HCT116 (cell line): ENCODE measurements at regions of chr20 and their contacts with region 1.

Region 1: DNA sequence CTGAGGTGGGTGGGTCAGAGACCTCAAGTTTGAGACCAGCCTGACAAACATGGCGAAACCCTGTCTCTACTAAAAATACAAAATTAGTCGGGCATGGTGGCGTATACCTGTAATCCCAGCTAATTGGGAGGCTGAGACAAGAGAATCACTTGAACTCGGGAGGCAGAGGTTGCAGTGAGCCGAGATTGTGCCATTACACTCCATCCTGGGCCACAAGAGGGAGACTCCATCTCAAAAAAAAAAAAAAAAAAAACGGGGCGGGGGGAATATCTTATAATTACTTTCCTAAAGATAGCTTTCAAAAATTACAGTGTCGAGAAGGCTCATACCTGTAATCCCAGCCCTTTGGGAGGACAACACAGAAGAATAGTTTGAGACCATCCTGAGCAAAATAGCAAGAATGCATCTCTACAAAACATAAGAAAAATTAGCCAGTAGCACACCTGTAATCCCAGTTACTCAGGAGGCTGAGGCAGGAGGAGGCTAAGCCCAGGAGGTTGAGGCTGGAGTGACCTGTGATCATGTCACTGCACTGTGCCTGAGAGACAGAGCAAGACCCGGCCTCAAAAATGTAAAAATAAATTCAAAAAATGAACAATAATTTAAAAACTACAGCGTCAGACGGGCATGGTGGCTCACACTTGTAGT is 25.8 kb downstream of the CBFA2T2 start:
- DNase-seq: no peak
- ATAC-seq: peak; percentile 42; the same call in 1 of the 2 replicates
- H3K4me3 ChIP-seq: no peak overlapping the region
- H3K27ac ChIP-seq: no peak overlapping the region
- H3K4me1 ChIP-seq: peaks cover 4 to 16% of the 10 kb centered on the region in 2 experiments; a peak in 2 of 4 replicates
- H3K27me3 ChIP-seq: no peaks in the 10 kb centered on the region
- CTCF ChIP-seq: peak; percentile 22 to 43 (median 43); a peak in 4 of 6 replicates
- POLR2A ChIP-seq: no peak
- RAD21 ChIP-seq: peak; percentile 27; the same call in 1 of the 2 replicates

Region 2: DNA sequence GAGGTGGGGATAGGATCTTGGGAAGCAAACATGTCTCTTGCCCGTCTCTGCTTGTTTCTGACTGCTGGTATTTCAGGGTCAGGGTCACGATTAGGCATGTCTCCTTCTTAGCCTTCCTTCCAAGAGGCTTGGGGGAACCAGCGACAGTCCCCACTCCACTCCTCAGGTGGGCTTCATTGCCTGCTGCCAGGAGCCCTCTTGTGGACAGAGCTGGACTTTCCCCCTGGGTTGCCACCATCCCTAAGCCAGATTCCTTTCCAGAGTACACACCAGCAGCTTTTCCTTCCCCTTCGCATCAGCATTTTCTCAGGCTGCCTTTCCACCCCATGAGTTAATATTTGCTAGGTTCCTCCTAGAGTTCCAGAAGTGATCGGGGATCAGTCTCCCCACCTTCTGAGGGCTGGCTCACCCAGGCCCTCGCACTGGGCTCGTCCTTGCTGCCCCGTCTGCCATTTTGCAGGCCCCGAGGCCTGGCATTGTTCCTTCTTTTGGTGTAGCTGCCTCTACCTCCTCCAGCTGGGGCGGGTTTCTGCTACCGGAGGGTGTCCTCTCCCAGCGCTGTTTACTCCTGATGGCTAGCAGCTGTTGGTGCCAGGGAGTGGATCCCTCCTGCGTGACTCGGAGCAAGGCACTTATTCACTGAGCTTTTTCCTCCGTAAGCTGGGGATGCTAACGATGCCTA is 137.7 kb after region 1 on chr20:
- CTCF ChIA-PET with region 1: no interaction called
- POLR2A ChIA-PET with region 1: no interaction called
- RAD21 ChIA-PET with region 1: no interaction called
- intact Hi-C with region 1: loop called (anchors 5 kb)
- DNase-seq: peak; percentile 35
- ATAC-seq: peak; percentile 76
- H3K4me3 ChIP-seq: no peak overlapping the region
- H3K27ac ChIP-seq: no peak overlapping the region
- H3K4me1 ChIP-seq: peaks cover 0 to 16% of the 10 kb centered on the region in 2 experiments; a peak in 1 of 4 replicates
- H3K27me3 ChIP-seq: no peaks in the 10 kb centered on the region
- CTCF ChIP-seq: peak; percentile 75 to 92 (median 78)
- POLR2A ChIP-seq: no peak
- RAD21 ChIP-seq: peak; percentile 89

Region 3: DNA sequence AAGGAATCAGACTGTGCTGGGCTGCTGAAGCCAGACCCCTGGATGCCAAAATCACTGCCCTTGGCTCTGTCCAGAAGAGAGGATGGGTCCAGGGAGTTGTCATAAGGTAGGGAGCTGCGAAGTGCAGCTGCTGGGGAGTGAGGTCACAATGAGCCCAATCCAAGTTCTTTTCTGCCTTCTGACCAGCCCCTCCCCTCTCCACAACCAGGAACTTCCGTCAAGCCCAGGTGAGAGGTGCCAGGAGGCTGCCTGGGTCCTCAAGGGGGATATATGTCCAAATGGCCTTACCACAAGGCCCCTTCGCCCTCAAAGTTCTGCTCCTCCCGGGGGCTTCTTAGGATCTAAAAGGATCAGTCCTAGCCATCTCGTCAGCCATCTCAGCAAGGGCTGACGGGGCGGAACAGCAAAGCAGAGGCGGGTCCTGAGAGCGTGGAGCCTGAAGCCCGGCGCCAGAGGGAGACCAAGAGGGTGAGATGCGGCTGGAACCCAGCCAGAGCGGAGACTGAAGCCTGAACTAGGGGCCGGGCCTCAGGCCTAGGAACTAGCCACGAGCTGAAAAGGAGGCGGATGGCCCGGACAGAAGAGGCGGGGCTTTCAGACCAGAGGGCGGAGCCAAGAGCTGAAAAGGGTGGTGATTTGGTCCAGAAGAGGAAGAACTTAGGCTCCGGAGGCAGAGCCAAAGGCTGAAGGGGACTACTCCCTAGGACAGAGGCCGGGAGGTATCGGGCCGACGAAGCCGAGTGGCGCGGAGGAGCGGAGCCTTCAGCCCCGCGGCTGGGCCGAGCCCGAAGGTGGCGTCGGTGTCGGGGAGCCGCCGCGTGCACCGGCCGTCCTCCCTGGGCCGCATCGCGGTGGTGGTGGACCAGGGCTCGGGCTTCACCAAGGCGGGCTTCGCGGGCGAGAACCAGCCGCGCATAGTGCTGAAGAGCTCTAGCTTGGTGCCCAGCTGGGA is 150.9 kb after region 1 on chr20 and contains the start of gene ACTL10:
- CTCF ChIA-PET with region 1: no interaction called
- POLR2A ChIA-PET with region 1: no interaction called
- RAD21 ChIA-PET with region 1: no interaction called
- intact Hi-C with region 1: no loop called
- DNase-seq: no peak
- ATAC-seq: no peak
- H3K4me3 ChIP-seq: no peak within 1 kb of the TSS
- H3K27ac ChIP-seq: peak within 1 kb of the TSS; percentile 17; the same call in 1 of the 2 replicates
- H3K4me1 ChIP-seq: peaks cover 9 to 22% of the 10 kb centered on the region in 2 experiments
- H3K27me3 ChIP-seq: no peaks in the 10 kb centered on the region
- CTCF ChIP-seq: no peak
- POLR2A ChIP-seq: no peak
- RAD21 ChIP-seq: no peak
- total RNA-seq, gene ACTL10: 0.22 TPM

Region 4: DNA sequence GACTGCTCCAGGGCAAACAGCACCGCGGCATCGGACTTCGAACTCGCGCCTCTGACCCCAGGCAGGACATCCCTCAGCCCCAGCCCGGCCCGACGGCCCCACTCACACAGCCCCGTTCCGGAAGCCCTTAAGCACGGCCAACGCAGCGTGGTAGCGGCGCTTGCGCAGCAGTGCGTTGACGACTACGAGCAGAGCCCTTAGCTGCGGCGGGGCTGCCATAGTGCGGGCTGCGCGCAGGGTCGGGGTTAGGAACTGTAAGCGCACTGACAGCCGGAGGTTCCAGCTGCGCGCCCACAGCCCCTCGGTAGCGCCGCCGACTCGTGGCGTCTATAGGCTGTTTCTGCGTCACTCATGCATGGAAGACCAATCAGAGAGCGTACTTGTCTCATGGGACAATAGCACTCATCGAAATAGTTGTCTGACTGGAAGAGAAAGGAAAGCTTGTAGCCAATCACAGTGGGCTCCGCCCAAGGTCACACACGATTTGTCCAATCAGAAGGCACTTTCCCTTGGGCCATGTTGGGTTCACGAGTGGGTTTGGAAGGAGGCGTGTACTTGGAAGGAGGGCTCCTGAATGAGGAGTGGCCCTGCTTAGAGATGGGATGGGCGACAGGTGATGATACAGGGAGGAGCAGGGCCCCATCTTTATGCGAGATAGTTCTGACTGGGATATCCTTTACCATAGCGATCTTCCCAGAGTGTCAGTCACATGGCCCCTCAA is 204.5 kb after region 1 on chr20 and contains the start of gene PXMP4:
- CTCF ChIA-PET with region 1: no interaction called
- POLR2A ChIA-PET with region 1: no interaction called
- RAD21 ChIA-PET with region 1: no interaction called
- intact Hi-C with region 1: no loop called
- DNase-seq: peak; percentile 98
- ATAC-seq: peak; percentile 98
- H3K4me3 ChIP-seq: peak within 1 kb of the TSS; percentile 80 to 90
- H3K27ac ChIP-seq: peak within 1 kb of the TSS; percentile 44
- H3K4me1 ChIP-seq: peaks cover 5 to 21% of the 10 kb centered on the region in 2 experiments; a peak in 3 of 4 replicates
- H3K27me3 ChIP-seq: no peaks in the 10 kb centered on the region
- CTCF ChIP-seq: no peak
- POLR2A ChIP-seq: peak; percentile 31
- RAD21 ChIP-seq: no peak
- total RNA-seq, gene PXMP4: 9.6 TPM